Psoas muscle (tissue), 8 donors: ENCODE measurements at regions of chr2 and their contacts with region 1.

Region 1: GRCh38 chr2:143162123-143162837 is 33.1 kb downstream of the ARHGAP15 start:
- DNase-seq: peak in 1 of 2 donors; percentile 14
- ATAC-seq: peak in 1 of 4 donors; percentile 58
- H3K4me3 ChIP-seq: no peak overlapping the region
- H3K27ac ChIP-seq: no peak overlapping the region
- H3K4me1 ChIP-seq: no peaks in the 10 kb centered on the region
- H3K27me3 ChIP-seq: no peaks in the 10 kb centered on the region
- CTCF ChIP-seq: peak; percentile 41

Region 2: GRCh38 chr2:141498561-141498960 is 1663.7 kb before region 1 on chr2:
- intact Hi-C with region 1: no loop called
- DNase-seq: no peak
- ATAC-seq: no peak
- H3K4me3 ChIP-seq: no peak overlapping the region
- H3K27ac ChIP-seq: no peak overlapping the region
- H3K4me1 ChIP-seq: no peaks in the 10 kb centered on the region
- H3K27me3 ChIP-seq: no peaks in the 10 kb centered on the region
- CTCF ChIP-seq: no peak

Region 3: DNA sequence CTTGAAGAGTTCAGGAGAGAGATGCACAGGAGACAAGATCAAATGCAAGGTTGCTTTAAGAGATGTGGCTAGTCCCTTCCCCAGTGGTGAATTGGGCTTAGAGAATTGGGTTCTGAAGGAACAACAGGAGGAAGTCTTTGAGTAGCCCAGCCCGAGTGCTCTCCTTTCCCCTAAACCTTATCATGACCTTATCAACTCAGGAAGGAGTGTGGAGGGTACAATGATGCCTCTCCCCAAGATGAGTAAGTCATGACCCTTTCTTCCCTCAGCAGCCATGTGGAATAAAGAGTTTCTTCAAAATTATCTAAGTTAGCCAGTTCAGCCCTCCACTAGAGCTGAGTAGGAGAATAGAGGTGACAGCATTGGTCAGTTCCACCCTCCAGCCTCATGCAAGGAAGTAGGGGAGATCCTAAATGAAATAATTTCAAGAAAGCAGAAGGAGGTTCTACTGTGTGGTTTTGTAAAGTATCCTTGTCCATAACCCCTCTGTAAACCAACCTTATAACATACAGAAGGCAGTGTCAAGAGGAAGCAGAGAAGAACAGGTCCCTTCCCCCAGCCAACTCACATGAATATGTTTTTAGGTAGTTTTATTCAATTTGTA is 55.3 kb after region 1 on chr2:
- intact Hi-C with region 1: loop called in 1 of 2 experiments (anchors 2 kb)
- DNase-seq: no peak
- ATAC-seq: no peak
- H3K4me3 ChIP-seq: no peak overlapping the region
- H3K27ac ChIP-seq: no peak overlapping the region
- H3K4me1 ChIP-seq: no peaks in the 10 kb centered on the region
- H3K27me3 ChIP-seq: no peaks in the 10 kb centered on the region
- CTCF ChIP-seq: no peak